Activated B cell treated with CpG ODN at 0.5 μM for 24 hours (primary cell): ENCODE measurements at regions of chr11 and their contacts with region 1.

Region 1: DNA sequence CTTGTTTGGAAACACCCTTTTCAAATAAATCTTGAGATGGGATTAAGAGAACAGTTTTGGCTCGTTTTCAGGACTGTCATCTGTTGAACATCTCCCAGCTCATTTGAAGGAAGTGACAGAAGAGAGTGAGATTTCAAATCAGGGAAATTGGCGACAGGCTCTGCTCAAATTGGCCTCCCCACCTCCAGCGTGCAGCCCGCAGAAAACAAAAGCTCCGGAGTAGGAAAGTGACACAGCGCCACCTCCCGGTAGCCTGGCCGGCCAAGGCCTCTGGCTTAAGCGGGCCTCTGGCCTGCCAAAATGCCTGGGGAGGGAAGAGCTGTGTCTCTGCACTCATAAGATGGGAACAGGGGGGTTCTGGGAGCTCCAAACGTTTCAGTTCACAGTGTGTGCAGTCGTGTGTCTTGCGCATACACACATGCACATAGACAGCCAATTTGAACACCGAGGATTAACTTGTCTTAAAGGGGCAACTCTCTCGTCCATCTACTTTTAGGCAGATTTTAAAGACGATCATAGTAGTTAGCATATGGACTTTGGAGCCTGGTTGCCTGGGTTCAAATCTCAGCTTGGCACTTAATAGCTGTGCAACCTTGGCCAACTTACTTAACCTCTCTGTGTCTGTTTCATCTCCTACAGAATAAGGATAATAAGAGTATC is 132.7 kb upstream of the RCN1 start:
- DNase-seq: no peak
- ATAC-seq: no peak
- H3K4me3 Mint-ChIP-seq: no peak overlapping the region
- H3K27ac Mint-ChIP-seq: no peak overlapping the region
- H3K4me1 Mint-ChIP-seq: no peaks in the 10 kb centered on the region
- H3K27me3 Mint-ChIP-seq: no peaks in the 10 kb centered on the region
- CTCF ChIP-seq: no peak

Region 2: DNA sequence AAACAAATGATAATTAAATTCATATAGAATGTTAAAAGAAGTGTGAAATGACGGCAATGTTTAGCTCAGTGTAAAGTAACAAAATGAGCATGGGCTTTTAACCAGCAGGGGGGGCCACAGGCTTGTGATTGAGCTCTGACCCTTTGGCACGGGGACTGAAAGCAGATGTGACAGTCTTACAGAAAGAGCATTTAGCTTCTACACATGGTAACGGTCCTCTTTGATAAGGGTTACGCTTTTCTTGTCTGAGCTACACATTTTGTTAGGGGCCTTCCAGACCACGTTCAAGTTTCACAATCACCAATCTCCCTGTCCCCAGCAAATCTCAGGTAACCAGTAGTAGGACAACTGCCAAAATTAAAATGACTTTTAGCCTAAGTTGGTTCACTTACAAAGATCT is 851.1 kb before region 1 on chr11:
- CTCF ChIA-PET with region 1: interaction called, 3 read pairs
- POLR2A ChIA-PET with region 1: no interaction called
- intact Hi-C with region 1: loop called (anchors 5 kb)
- DNase-seq: peak; percentile 14
- ATAC-seq: no peak
- H3K4me3 Mint-ChIP-seq: no peak overlapping the region
- H3K27ac Mint-ChIP-seq: no peak overlapping the region
- H3K4me1 Mint-ChIP-seq: no peaks in the 10 kb centered on the region
- H3K27me3 Mint-ChIP-seq: no peaks in the 10 kb centered on the region
- CTCF ChIP-seq: no peak